ENCODE measurements at regions of chr5 and their contacts with region 1.

Region 1: DNA sequence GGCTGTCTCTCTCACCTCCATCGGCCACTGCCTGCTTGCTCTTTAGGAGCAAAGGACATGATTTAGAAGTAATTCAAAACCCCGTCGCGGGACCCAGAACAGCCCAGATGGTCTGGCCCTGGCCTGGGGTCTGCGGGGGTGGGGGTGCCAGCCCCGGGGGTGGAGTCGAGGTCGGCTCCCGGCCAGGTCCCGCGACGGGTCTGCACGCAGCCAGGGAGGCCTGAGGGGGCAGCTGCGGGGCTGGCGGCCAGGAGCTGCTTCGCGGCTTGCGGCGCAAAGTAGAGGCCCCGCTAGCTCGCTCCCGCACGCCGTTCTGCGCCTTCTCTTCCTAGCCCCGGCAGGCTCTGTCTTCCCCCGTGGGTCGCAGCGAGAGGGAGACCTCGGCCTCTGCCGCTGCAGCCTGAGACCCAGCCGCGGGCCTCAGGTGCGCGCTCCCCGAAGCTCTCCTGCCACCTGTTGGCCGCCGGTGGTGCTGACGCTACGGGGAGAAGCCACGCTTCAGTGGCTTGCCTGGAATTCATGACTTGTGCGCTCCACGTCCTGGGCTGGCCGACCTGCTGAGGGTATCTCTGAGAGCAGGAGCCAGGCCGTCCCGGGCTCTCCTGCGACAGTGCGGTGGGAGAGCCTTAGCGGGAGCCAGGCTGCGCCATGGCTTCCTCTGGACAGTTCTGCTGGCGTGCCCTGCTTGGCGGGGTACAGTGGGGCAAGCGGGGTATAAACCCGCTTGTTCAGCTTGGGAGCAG is 157.2 kb upstream of the PITX1 start:
- DNase-seq: peak; percentile 74 to 88
- ATAC-seq: peak; percentile 98 to 99 (median 98)
- H3K4me3 ChIP-seq: peak overlapping the region; percentile 74
- H3K27ac ChIP-seq: peak overlapping the region; percentile 8
- H3K4me1 ChIP-seq: peaks cover 4% of the 10 kb centered on the region
- H3K27me3 ChIP-seq: no peaks in the 10 kb centered on the region
- CTCF ChIP-seq: peak; percentile 94

Region 2: DNA sequence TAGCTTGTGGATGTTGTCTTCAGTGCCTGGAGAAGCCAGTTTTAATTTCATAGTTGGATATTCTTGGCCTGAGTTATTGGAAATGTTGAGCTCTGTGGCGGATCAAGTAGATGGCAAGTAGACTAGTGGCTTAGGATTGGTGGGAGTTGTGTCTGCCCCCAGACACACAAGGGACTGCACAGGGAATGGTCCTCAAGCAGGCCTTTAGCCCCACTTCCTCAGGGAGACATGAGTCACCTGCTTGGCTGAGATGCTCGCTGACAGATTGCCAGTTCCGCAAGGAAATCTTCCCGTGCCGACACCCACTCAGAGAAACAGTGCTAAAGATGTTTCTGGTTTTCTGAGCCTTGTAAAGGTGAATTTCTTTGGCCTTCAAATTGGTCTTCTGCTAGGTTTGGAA is 242.3 kb before region 1 on chr5:
- intact Hi-C with region 1: loop called in 1 of 2 experiments (anchors 10 kb)
- DNase-seq: peak; percentile 43 to 81
- ATAC-seq: peak; percentile 84 to 94 (median 87)
- H3K4me3 ChIP-seq: no peak overlapping the region
- H3K27ac ChIP-seq: peak overlapping the region; percentile 79
- H3K4me1 ChIP-seq: peaks cover 25% of the 10 kb centered on the region
- H3K27me3 ChIP-seq: no peaks in the 10 kb centered on the region
- CTCF ChIP-seq: no peak

Region 3: GRCh38 chr5:134975078-134975715 is 216.1 kb before region 1 on chr5:
- intact Hi-C with region 1: no loop called
- DNase-seq: no peak
- ATAC-seq: peak in 1 of 4 donors; percentile 41
- H3K4me3 ChIP-seq: no peak overlapping the region
- H3K27ac ChIP-seq: no peak overlapping the region
- H3K4me1 ChIP-seq: no peaks in the 10 kb centered on the region
- H3K27me3 ChIP-seq: no peaks in the 10 kb centered on the region
- CTCF ChIP-seq: no peak

Region 4: DNA sequence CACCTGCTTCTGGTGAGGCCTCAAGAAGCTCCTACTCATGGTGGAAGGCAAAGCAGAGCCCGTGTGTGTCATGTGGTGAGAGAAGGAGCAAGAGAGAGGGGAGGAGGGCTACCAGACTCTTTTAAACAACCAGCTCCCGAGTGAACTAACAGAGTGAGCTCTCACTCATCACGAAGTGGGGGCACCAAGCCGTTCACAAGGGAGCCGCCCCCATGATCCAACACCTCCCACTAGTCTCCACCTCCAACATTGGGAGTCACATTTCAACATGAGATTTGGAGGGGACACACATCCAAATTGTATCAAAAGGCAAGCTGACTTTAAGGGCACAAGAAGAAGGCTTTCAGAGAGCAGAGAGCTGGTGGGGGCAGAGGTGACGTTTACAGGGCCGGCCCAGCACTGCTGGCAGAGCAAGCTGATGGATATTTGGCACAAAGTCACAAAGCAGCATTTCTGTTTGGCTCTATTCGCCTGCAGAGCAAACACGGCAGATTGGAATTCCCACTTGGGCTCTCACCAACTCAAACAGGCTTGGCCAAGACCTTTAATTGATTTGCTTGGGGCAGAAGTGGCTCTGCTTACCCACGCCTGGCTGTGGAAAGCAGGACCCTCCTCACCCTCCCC is 177.2 kb before region 1 on chr5:
- intact Hi-C with region 1: loop called (anchors 5 to 10 kb)
- DNase-seq: no peak
- ATAC-seq: peak in 1 of 4 donors; percentile 40
- H3K4me3 ChIP-seq: no peak overlapping the region
- H3K27ac ChIP-seq: no peak overlapping the region
- H3K4me1 ChIP-seq: no peaks in the 10 kb centered on the region
- H3K27me3 ChIP-seq: no peaks in the 10 kb centered on the region
- CTCF ChIP-seq: no peak

Region 5: DNA sequence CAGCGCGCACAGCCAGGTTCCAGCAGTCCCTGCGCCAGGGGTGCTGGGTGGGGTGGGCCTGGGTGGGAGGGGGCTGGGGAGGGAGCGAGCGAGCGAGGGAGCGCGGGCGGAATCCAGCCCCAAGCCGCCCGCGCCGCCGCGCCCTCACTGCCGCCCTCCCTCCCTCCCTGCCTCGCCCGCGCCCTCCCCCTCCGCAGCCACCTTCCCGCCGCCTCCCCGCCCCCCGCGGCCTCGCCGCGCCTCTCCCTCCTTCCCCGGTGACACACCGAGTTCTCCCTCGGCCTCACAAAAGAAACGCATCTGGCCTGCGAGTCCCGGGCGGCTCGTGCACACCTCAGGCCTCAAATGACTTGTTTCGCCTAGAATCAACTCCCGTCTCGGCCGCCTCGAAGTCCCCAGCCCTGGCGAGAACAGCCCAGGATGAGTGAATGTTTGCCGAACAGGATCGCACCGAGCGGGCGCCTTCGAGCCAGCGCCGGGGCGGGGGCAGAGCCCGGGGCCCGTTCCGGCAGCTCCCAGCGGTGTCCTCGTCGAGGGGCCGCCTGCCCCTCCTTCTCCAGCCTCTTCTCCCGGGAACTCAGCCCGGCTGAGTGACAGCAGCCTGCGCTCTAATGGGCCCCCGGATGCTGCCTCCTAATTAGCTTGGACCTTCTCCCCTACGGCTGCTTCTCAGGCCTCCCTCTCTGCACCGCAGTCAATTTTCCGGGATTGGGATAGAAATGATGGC is 156.9 kb before region 1 on chr5:
- intact Hi-C with region 1: loop called in 1 of 2 experiments (anchors 5 kb)
- DNase-seq: peak; percentile 66 to 92
- ATAC-seq: peak; percentile 72 to 81 (median 75)
- H3K4me3 ChIP-seq: peak overlapping the region; percentile 85
- H3K27ac ChIP-seq: peak overlapping the region; percentile 90
- H3K4me1 ChIP-seq: peaks cover 24% of the 10 kb centered on the region
- H3K27me3 ChIP-seq: peaks cover 0 to 46% (median 4%) of the 10 kb centered on the region in 3 donors
- CTCF ChIP-seq: no peak

Region 6: GRCh38 chr5:135242021-135242865 is 51.0 kb after region 1 on chr5:
- intact Hi-C with region 1: no loop called
- DNase-seq: peak in 1 of 2 donors; percentile 58
- ATAC-seq: peak; percentile 66 to 87 (median 75)
- H3K4me3 ChIP-seq: no peak overlapping the region
- H3K27ac ChIP-seq: peak overlapping the region; percentile 90
- H3K4me1 ChIP-seq: peaks cover 82% of the 10 kb centered on the region
- H3K27me3 ChIP-seq: no peaks in the 10 kb centered on the region
- CTCF ChIP-seq: no peak

Measured in psoas muscle (tissue), 8 donors.